ENCODE measurements at regions of chr20 and their contacts with region 1.

Region 1: DNA sequence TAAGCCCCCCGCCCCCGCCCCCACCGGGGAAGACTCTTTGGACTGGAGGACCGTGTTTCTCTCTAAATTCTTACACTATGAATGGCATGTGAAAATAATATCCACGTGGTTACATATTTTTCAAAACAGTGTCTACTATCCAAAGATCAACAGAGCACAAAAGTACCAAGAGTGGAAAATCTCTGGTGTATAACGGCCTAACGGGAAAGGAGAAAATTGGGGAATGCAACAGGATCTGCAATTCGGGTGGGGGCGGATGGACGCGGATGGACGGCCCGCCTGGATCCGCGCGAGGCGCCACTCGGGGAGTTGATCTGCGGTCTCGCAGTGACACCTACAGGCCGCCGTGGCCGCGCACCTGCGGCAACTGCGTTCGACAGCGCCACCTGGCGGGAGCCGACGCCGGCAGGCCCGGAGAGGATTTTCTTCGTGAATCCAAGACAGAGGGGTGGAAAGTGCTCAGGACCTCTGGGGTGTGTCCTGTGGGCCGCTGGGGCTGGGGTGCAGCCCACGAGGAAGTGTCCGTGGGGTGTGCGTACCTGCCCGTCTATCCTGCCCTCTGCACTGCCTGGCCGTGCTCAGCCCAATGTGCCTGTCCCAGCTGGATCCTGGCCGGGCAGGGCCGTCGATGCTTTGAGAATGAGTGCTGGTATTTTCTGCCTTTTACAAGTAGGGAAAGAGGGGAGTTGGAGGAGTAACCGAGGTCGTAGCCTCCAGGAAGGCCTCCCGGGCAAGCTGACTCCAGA is 18.6 kb downstream of the ANKRD60 start:
- DNase-seq: peak; percentile 53 to 85
- H3K4me3 ChIP-seq: no peak overlapping the region
- H3K27ac ChIP-seq: peak overlapping the region; percentile 8
- H3K4me1 ChIP-seq: no peaks in the 10 kb centered on the region
- H3K27me3 ChIP-seq: no peaks in the 10 kb centered on the region
- CTCF ChIP-seq: peak; percentile 100

Region 2: DNA sequence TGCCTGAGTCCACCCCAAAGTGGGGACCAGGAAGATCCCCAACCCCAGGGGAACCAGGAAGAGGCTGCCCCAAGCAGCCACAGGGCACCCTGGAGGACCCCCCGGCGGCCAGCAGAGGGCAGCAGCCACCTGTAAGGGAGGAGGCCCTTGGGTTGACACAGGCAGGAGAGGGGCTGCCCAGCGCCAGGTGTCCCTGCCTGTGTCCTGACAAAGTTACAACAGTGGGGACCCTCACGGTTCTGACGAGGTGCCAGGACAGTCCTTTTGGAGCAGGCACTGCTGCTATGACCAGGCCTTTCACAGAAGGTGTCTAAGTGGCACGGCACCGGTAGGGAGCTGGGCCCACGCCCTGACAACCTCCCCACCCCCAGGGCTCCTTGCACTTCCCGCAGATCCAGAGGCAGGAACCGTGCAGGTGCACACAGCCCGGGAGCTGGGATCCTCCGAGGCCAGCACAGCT is 1120.1 kb before region 1 on chr20:
- CTCF ChIA-PET with region 1: no interaction called
- POLR2A ChIA-PET with region 1: no interaction called
- intact Hi-C with region 1: loop called (anchors 10 kb)
- DNase-seq: peak; percentile 57 to 78
- H3K4me3 ChIP-seq: no peak overlapping the region
- H3K27ac ChIP-seq: no peak overlapping the region
- H3K4me1 ChIP-seq: no peaks in the 10 kb centered on the region
- H3K27me3 ChIP-seq: peaks cover 17% of the 10 kb centered on the region; the same call in 1 of the 2 replicates
- CTCF ChIP-seq: peak; percentile 99

Region 3: DNA sequence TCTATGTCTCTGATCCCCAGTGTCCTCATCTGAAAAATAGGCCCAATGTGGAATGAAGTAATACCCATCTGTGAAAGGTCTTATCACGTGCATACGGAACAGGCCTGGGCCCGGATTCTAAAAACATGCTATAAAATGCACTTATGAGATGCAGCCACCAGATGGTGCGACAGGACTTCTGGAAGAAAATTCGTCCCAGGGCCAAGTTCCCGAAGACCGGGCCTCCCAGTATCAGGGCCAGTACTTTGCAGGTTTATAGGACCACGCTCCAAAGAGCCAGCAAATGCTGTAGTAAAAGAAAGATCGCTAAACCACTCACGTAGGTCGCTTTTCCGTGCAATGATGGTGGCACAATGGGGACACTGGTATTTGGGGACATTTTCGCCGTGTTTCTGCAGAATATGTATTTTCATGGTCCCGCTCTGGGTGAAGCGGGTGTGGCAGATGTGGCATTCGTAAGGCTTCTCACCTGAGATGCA is 695.5 kb before region 1 on chr20:
- CTCF ChIA-PET with region 1: interaction called, 3 read pairs
- POLR2A ChIA-PET with region 1: no interaction called
- intact Hi-C with region 1: loop called (anchors 1 kb)
- DNase-seq: peak; percentile 56
- H3K4me3 ChIP-seq: no peak overlapping the region
- H3K27ac ChIP-seq: no peak overlapping the region
- H3K4me1 ChIP-seq: no peaks in the 10 kb centered on the region
- H3K27me3 ChIP-seq: peaks cover 9% of the 10 kb centered on the region; the same call in 1 of the 2 replicates
- CTCF ChIP-seq: peak; percentile 92

Region 4: DNA sequence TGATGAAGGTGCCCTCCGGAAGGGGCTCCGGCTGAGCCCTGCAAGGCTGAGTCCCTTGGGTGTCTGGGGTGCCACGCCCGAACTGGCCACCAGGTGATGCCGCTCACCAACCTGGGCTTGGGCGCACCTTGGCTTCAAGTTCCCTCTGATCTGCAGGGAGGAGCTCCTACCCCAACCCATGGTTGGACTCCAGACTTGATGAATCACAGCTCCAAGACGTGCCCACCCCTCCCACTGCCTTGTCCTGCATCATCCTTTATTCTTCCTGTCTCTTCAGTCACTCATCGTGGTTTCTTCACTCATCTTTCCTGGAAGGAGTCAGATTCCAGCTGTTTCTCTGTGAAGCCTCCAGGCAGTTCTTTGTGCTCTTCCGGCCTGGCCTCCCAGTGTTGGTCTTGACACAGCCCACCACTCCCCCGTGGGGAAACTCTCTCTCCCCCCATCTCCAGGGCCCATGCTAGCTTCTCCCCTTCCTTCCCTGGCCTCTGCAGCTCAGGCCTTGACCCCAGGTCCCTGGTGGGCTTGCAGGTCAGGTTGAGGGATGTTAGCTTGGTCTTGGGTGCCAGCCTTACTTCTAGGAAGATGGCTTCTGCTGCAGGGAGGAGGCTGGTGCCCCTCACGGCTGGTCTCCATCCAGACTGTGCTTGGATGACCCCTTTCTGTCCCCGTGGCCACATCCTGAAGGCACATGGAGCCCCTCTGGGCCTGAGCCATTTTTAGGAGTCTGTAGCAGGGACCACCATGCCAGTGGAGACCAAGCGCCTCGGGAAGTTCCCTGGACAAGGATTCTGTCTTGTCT is 587.0 kb before region 1 on chr20:
- CTCF ChIA-PET with region 1: interaction called, 5 read pairs
- POLR2A ChIA-PET with region 1: no interaction called
- intact Hi-C with region 1: loop called (anchors 1 kb)
- DNase-seq: peak; percentile 83 to 90
- H3K4me3 ChIP-seq: no peak overlapping the region
- H3K27ac ChIP-seq: no peak overlapping the region
- H3K4me1 ChIP-seq: peaks cover 24% of the 10 kb centered on the region
- H3K27me3 ChIP-seq: no peaks in the 10 kb centered on the region
- CTCF ChIP-seq: peak; percentile 99

Region 5: GRCh38 chr20:58160451-58161061 is 49.3 kb before region 1 on chr20:
- CTCF ChIA-PET with region 1: no interaction called
- POLR2A ChIA-PET with region 1: no interaction called
- intact Hi-C with region 1: no loop called
- DNase-seq: no peak
- H3K4me3 ChIP-seq: no peak overlapping the region
- H3K27ac ChIP-seq: no peak overlapping the region
- H3K4me1 ChIP-seq: no peaks in the 10 kb centered on the region
- H3K27me3 ChIP-seq: no peaks in the 10 kb centered on the region
- CTCF ChIP-seq: no peak

Region 6: DNA sequence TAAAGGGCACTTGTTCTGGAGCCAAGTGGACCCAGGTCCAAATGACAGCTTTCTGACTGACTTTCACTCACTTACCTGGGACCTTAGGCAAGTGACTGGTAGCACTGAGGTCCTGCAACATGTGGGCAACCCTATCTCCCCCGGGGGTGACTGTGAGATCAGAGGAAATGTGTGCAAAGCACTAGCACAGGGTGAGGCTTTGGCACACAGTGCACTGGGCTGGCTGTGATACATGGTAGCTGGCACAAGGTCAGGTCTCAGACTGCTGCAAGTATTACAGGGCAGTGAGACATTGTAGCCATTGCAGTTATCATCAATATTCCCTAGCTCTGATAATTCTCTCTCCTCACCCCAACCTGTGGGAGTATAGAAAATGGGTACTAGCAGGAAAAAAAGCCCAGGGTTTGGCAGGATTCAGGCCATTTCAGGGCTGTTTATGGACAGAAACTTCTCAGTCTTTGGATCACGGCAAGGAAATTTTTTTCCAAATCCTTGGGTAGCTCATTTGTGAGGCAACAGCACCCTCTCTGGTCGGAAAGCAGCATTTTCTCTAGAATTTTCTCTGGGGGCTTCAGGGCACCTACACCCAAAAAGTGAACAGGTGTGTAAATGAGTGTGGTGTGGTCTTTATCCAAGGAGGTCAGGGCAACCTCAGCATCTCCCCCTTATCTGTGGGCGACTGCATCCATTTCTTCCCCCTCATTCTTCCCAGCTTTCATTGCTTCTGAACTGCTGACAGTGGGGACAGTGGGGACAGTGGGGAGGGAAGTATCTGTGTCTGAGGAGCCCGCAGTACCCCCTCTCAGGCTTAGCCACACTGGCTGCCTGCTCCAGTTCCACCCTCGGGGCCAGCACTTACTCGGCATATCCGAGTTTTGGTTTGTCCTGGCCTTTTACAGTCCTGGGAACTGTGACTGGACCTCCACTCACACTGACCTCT is 1245.8 kb after region 1 on chr20:
- CTCF ChIA-PET with region 1: no interaction called
- POLR2A ChIA-PET with region 1: no interaction called
- intact Hi-C with region 1: loop called (anchors 5 kb)
- DNase-seq: peak; percentile 9 to 34
- H3K4me3 ChIP-seq: no peak overlapping the region
- H3K27ac ChIP-seq: no peak overlapping the region
- H3K4me1 ChIP-seq: no peaks in the 10 kb centered on the region
- H3K27me3 ChIP-seq: peaks cover 99% of the 10 kb centered on the region
- CTCF ChIP-seq: peak; percentile 78

Measured in PC-9 (cell line).